Right ventricle myocardium inferior (tissue), 1 donor: ENCODE measurements at regions of chr2 and their contacts with region 1.

Region 1: DNA sequence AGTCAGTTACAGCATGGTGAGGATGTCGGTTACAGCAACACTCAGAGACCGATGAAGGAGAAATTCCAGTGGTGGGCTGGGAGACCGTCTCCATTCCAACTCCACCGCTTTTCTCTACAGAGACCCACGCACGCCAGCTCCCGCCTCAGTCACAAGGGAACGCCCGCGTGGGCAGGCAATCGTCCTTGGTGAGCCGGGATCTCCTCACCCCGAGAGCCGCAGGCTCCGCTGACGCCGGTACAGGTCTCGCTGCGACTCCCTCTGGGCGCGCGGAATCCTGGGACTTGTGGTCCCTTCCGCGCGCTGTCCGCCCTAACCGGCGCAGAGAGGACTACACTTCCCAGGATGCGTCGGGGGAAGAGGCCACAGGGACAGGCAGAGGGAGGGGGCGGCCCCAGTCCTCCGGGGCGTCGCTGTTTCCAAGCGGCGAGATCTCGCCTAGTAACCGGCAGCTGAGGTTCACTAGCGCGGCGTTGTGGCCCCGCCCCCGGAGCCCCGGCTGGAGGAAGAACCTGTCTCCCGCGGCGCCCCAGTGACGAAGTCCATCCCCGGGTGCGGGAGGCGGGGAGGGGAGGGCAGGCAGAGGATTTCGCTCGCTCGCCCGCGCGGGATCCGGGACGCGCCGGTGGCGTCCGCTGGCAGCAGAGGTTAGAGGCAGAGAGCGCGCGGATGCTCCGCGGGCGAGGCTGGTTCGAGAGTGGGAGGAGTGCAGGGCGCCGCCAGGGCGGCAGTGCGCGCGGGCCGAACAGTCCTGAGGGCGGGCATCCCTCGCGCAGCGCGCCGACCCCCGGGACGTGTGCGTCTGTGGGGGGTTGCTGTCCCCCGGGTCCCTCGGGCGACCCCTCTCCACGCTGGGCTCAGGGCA is at the start of gene EML6:
- DNase-seq: peak; percentile 99
- ATAC-seq: peak; percentile 100
- total RNA-seq, gene EML6: 0.16 TPM

Region 2: DNA sequence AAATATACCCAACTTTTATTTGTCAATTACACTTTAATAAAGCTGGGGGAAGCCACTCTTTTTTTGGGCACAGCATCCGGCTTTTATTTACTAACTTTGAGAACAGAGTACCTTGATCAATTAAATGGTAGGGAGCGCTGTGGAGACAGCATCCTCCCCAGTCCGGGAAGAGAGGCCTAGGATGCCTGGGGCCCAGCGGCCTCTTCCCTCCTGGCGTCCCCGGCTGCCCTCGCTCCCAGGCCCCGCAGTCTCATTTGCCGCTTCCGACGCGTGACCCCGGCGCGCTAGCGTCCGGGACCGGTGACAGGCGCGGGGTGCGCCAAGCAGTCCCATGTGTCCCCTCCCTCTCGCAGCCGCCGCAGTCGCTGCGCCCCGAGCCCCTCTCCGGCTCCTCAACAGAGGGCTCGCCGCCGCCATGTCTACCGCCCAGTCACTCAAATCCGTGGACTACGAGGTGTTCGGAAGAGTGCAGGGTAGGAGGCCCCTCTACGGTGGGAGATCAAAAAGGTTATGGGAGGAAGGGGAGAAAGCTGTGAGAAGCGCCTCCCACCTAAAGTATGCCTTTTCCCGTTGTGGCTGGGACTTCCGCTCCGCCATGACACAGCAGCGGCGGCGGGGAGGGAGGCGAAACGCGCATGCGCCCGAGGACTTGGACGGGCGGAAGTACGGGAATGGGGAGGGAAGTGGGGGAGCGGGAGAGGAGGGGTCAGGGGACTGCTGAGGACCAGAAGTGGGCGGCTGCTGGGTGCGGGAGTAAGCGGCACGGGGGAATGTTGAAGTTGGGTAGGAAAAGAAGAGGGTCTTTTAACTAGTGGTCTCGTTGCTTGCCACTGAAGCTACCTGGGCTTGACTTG is 607.9 kb before region 1 on chr2 and contains the start of gene ACYP2:
- intact Hi-C with region 1: loop called (anchors 5 kb)
- DNase-seq: peak; percentile 98
- ATAC-seq: peak; percentile 99
- total RNA-seq, gene ACYP2: 62.6 TPM

Region 3: DNA sequence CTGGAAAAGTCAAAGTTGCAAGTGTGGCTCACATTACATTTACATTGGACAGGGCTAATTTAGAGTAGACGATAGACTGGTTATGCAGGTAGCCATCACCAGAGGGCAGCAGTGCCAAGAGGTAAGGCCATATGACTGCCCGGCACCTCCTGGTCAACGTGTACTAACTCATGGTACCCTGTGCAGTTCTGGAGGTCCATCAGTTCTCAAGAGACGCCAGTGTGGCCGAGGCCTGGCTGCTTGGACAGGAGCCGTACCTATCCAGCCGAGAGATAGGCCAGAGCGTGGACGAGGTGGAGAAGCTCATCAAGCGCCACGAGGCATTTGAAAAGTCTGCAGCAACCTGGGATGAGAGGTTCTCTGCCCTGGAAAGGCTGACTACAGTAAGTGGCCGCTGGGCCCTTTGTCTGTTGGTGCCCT is 65.7 kb before region 1 on chr2:
- intact Hi-C with region 1: no loop called
- DNase-seq: peak; percentile 69
- ATAC-seq: peak; percentile 66

Region 4: DNA sequence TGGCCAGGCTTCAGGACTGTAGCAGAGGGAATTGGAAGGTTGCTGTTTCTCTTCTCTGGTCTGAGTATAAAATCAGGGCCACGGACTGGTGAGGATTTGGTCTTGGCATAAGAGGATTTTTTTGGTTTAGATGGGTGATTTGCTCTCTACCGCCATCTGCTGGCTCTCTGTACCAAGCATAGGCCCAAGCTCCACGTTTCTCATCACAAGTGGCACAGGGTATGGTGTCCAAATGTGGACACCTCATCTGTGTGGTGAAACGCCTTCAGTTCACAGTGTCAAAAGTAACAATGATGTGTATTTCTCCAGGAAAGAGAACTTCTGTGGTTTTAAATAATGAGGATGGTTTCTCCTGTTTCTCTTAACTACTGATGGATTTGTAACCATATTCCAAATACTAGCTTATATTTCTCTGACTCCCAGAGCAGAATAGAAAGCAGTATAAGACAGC is 115.2 kb after region 1 on chr2:
- intact Hi-C with region 1: loop called (anchors 10 kb)
- DNase-seq: peak; percentile 68
- ATAC-seq: peak; percentile 77